ENCODE measurements at regions of chr4 and their contacts with region 1.

Region 1: GRCh38 chr4:77052352-77052751 is 23.4 kb downstream of the CCNI start:
- DNase-seq: peak; percentile 58
- H3K4me3 ChIP-seq: no peak overlapping the region
- H3K27ac ChIP-seq: no peak overlapping the region
- H3K4me1 ChIP-seq: peaks cover 3% of the 10 kb centered on the region
- H3K27me3 ChIP-seq: no peaks in the 10 kb centered on the region
- CTCF ChIP-seq: peak; percentile 66 to 70
- POLR2A ChIP-seq: no peak

Region 2: GRCh38 chr4:77065382-77065781 is 13.0 kb after region 1 on chr4:
- CTCF ChIA-PET with region 1: interaction called, 11 read pairs
- POLR2A ChIA-PET with region 1: no interaction called
- dilution Hi-C with region 1: no loop called
- intact Hi-C with region 1: no loop called
- DNase-seq: no peak
- H3K4me3 ChIP-seq: no peak overlapping the region
- H3K27ac ChIP-seq: no peak overlapping the region
- H3K4me1 ChIP-seq: no peaks in the 10 kb centered on the region
- H3K27me3 ChIP-seq: no peaks in the 10 kb centered on the region
- CTCF ChIP-seq: no peak
- POLR2A ChIP-seq: no peak

Region 3: GRCh38 chr4:77156533-77156911 is 104.2 kb after region 1 on chr4:
- CTCF ChIA-PET with region 1: interaction called, 11 read pairs
- POLR2A ChIA-PET with region 1: no interaction called
- dilution Hi-C with region 1: no loop called
- intact Hi-C with region 1: loop called (anchors 2 kb)
- DNase-seq: peak; percentile 99
- H3K4me3 ChIP-seq: peak overlapping the region; percentile 75 to 98 (median 80)
- H3K27ac ChIP-seq: peak overlapping the region; percentile 86
- H3K4me1 ChIP-seq: peaks cover 15% of the 10 kb centered on the region
- H3K27me3 ChIP-seq: peaks cover 19 to 22% of the 10 kb centered on the region in 2 experiments
- CTCF ChIP-seq: no peak
- POLR2A ChIP-seq: peak; percentile 57